PC-3 (cell line): ENCODE measurements at regions of chr18 and their contacts with region 1.

Region 1: GRCh38 chr18:63005306-63005705 is 290.0 kb downstream of the PHLPP1 start:
- DNase-seq: no peak
- ATAC-seq: no peak
- H3K4me3 ChIP-seq: no peak overlapping the region
- H3K27ac ChIP-seq: no peak overlapping the region
- H3K4me1 ChIP-seq: no peaks in the 10 kb centered on the region
- H3K27me3 ChIP-seq: peaks cover 11% of the 10 kb centered on the region
- CTCF ChIP-seq: no peak

Region 2: GRCh38 chr18:62596145-62597005 is 408.9 kb before region 1 on chr18:
- CTCF ChIA-PET with region 1: no interaction called
- POLR2A ChIA-PET with region 1: no interaction called
- intact Hi-C with region 1: no loop called
- DNase-seq: no peak
- ATAC-seq: peak; percentile 43
- H3K4me3 ChIP-seq: peak overlapping the region; percentile 31; the same call in 1 of the 2 replicates
- H3K27ac ChIP-seq: no peak overlapping the region
- H3K4me1 ChIP-seq: no peaks in the 10 kb centered on the region
- H3K27me3 ChIP-seq: peaks cover 5% of the 10 kb centered on the region; the same call in 1 of the 2 replicates
- CTCF ChIP-seq: no peak

Region 3: GRCh38 chr18:63057707-63058106 is 52.4 kb after region 1 on chr18:
- CTCF ChIA-PET with region 1: no interaction called
- POLR2A ChIA-PET with region 1: interaction called, 13 read pairs
- intact Hi-C with region 1: no loop called
- DNase-seq: no peak
- ATAC-seq: no peak
- H3K4me3 ChIP-seq: no peak overlapping the region
- H3K27ac ChIP-seq: no peak overlapping the region
- H3K4me1 ChIP-seq: no peaks in the 10 kb centered on the region
- H3K27me3 ChIP-seq: peaks cover 16% of the 10 kb centered on the region; the same call in 1 of the 2 replicates
- CTCF ChIP-seq: no peak